Dorsolateral prefrontal cortex (tissue), 120 donors: ENCODE measurements at regions of chr3 and their contacts with region 1.

Region 1: GRCh38 chr3:11643605-11644087 is at the start of gene VGLL4:
- DNase-seq: peak; percentile 82 to 93 (median 90)
- H3K4me3 ChIP-seq: peak within 1 kb of the TSS; percentile 48 to 89 (median 74)
- H3K27ac ChIP-seq: peak within 1 kb of the TSS; percentile 51 to 98 (median 95)
- H3K27me3 ChIP-seq: no peaks in the 10 kb centered on the region
- CTCF ChIP-seq: peak in 30 of 56 donors; percentile 10 to 54 (median 28)
- total RNA-seq, gene VGLL4: 41.2 to 97.0 (median 59.1) TPM

Region 2: GRCh38 chr3:11379233-11379823 is 264.3 kb before region 1 on chr3:
- intact Hi-C with region 1: loop called (anchors 2 to 5 kb)
- DNase-seq: no peak
- H3K4me3 ChIP-seq: peak overlapping the region in 46 of 59 donors; percentile 1 to 57 (median 27)
- H3K27ac ChIP-seq: peak overlapping the region in 48 of 59 donors; percentile 7 to 79 (median 60)
- H3K27me3 ChIP-seq: no peaks in the 10 kb centered on the region
- CTCF ChIP-seq: peak; percentile 38 to 89 (median 78)

Region 3: DNA sequence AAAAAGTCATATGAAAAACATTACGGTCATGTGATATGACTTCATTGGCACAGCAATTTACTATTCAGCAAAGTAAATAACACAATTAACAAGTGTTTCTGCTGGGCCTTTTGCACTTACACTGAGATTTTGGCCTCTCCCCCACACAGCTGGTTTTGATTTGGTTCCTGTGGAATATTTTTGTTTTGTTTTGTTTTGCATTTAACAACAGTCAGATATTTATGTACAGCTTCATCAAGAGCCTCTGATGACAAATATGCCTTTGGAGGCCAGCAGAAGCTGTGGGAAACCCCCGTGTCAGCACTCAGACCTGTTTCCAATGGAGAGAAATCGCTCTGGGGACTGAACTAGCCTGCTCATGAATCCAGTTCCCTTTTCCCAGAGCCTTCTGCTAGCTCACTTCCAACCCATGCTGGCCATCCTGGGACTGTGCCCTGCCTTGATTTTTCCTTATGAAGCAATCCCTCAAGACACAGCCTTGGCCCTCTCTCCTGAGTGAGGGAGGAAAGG is 209.6 kb before region 1 on chr3:
- intact Hi-C with region 1: loop called in 1 of 2 experiments (anchors 2 kb)
- DNase-seq: peak in 6 of 10 donors; percentile 16 to 45 (median 32)
- H3K4me3 ChIP-seq: peak overlapping the region in 34 of 59 donors; percentile 1 to 46 (median 24)
- H3K27ac ChIP-seq: peak overlapping the region; percentile 4 to 94 (median 83)
- H3K27me3 ChIP-seq: no peaks in the 10 kb centered on the region
- CTCF ChIP-seq: peak in 1 of 56 donors; percentile 6

Region 4: DNA sequence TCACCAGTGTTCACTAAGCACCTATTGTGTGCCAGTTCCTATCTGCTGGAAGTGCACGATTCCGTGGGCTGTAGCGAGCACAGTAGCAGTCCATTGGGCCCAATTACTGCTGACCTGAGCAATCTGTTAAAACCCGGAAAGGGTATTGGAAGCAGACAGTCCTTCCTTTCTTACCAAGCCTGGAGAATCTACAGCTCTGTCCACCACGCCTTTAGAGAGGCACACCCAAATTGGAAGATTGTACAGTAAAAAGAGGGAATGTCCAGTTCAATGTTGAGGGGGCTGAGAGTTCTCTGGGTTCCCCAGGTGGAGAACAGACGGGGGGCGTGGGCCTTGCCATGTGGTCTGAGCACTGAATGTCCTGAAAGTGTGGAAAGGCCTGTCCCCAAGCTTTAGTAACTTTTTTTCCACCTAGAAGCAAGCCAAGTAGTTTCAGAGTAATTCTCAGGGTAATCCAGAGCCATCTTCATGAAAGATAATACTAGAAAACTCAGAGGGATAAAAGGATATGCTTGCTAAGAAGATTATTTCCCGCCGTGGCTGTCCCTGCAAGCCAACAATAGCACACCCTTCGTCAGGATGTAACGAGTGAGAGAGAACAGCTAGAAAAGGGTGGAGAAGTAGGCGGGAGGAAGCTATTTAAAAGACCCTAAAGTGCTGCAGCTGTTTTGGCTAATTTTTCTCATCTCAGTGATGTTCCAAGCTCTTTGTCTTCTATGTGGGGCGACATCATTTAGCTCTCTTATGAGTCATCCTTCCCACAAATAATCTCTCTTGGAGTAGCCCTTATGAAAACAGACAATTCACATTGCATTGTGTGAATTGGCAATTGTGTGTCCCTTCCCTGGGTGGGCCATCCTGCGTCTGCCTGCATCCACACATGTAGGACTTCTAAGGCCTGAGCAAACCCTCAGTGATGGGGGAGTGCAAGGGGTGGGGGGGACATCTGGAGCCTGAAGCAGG is 190.5 kb before region 1 on chr3:
- intact Hi-C with region 1: loop called in 1 of 2 experiments (anchors 2 kb)
- DNase-seq: peak in 7 of 10 donors; percentile 20 to 52 (median 38)
- H3K4me3 ChIP-seq: peak overlapping the region in 11 of 59 donors; percentile 5 to 30 (median 15)
- H3K27ac ChIP-seq: peak overlapping the region in 58 of 59 donors; percentile 1 to 88 (median 71)
- H3K27me3 ChIP-seq: no peaks in the 10 kb centered on the region
- CTCF ChIP-seq: peak in 3 of 56 donors; percentile 7 to 9 (median 8)

Region 5: DNA sequence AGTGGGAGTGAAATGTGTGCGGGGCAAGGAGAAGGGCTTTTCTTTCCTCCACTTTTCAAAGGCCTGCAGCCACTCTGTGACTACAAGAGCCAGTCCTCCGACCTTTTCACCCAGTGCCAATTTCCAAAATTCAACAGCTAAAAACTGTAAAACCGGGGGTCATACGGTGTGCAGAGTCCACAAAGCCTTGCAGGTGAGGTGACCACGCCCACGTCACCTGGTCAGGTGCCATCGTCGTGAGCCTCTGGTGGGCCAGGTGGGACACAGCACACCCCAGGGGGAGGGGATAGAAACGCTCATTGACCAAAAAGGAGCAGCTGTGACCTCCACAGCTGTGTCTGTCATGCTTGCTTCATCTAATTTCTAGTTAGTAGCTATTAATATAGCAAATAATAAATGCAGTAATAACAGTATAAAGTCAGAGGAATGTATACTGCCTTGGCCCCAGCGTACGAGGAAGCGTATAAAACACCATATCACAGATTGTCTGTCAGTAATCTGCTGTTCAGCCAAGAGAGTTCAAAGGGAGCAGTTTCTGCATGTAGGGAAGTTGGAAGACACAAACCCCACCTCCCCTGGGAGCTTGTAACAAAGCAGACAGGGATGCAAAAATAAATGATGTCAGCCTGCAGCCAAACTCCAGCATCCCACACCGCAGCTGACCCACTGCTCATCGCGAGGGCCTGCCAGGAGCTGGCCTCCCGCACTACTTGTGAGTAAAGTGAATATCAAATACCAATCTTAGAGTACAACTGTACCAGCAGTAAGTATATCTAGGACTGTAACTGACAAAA is 86.6 kb before region 1 on chr3:
- intact Hi-C with region 1: loop called in 1 of 2 experiments (anchors 5 kb)
- DNase-seq: peak in 1 of 10 donors; percentile 43
- H3K4me3 ChIP-seq: peak overlapping the region in 3 of 59 donors; percentile 5 to 10 (median 9)
- H3K27ac ChIP-seq: peak overlapping the region in 57 of 59 donors; percentile 1 to 98 (median 77)
- H3K27me3 ChIP-seq: no peaks in the 10 kb centered on the region
- CTCF ChIP-seq: no peak

Region 6: DNA sequence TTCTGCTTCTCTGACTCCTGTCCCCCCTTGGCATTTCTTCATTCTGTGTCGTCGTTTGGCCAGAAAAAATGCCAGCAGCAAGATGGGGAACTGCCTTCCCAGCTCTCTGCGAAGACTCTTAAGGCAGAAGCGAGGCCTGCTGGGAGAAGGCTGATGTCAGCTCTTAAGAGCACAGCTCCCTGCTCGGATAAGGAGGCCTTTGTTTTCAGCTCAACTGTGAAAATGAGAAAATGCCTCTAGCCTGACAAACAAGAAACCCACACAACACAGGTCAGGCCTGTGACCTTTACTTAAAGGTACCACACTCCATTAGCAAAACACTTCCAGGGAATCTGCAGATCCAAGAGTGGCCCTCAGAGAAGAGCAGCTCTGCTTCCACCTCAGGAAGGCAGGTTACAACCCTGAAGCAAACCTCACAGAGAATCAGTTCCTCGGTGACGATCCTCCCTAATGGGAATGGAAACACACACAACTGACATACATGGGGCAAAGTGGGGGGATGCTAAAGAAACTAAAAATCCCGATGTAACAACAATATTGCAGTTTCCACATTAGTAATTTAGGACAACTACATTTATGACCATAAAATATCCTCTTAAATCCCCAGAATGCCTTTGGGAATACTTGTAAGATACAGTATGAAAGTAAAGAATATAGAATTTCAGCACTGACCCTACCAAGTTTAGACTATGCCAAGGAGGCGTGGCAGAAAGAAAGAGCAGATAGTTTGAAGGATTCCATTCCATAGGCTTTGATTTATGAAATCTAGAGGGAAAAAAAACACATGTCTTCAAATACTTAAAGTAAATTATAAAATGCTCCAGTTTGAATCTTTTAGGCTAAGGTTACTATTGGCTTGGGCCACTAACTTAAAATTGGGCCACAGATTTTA is 52.0 kb before region 1 on chr3:
- intact Hi-C with region 1: loop called (anchors 2 to 5 kb)
- DNase-seq: peak in 9 of 10 donors; percentile 64 to 85 (median 80)
- H3K4me3 ChIP-seq: peak overlapping the region in 52 of 59 donors; percentile 0 to 60 (median 32)
- H3K27ac ChIP-seq: peak overlapping the region; percentile 70 to 98 (median 92)
- H3K27me3 ChIP-seq: no peaks in the 10 kb centered on the region
- CTCF ChIP-seq: peak in 2 of 56 donors; percentile 14 to 15

Region 7: DNA sequence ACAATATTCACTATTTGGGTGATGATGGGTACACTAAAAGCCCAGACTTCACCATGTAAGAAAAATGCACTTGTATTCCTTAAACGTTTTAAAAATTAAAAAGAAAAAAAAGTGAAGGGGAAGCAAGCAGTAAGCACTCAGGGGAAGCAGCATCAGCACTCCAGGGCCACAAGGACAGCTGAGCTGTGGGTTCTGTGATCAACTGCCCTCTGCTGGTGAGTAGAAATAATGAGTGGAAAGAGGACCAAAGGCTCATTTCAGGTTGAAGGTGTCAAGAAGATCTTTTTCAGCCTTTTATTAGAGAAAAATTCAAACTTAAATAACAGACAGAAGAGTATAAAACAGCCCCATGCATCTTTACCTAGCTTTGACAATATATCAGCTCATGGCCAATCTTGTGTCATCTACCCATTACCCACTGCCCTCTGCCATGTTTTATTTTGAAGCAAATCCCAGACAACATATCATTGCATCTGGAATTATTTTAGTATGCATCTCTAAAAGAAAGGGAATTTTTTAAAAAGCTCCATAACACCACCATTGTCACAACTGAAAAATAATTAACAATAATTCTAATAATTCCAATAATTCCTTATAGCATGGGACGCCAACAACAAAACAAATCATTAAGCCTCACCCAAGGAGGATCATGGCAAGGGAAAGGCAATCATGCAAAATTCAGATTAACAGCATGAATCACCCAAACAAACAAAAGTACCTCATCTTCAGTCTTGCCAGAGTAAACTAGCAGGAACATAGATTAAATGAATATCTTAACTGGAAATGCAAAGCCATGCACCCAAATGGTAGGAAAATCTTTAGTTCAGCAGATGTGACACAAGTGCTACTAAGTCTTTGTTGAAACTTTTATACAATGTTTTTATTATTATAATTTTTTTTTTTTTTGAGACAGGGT is 160.6 kb after region 1 on chr3:
- intact Hi-C with region 1: loop called in 1 of 2 experiments (anchors 10 kb)
- DNase-seq: peak in 5 of 10 donors; percentile 24 to 43 (median 38)
- H3K4me3 ChIP-seq: no peak overlapping the region
- H3K27ac ChIP-seq: no peak overlapping the region
- H3K27me3 ChIP-seq: no peaks in the 10 kb centered on the region
- CTCF ChIP-seq: peak; percentile 47 to 85 (median 76)